ENCODE measurements at regions of chr9 and their contacts with region 1.

Region 1: GRCh38 chr9:3441197-3441816 is 84.5 kb downstream of the RFX3 start:
- DNase-seq: peak in 33 of 35 experiments; percentile 1 to 67 (median 34)
- ATAC-seq: peak; percentile 48 to 74 (median 68)
- H3K4me3 ChIP-seq: no peak overlapping the region
- H3K4me3 Mint-ChIP-seq: no peak overlapping the region
- H3K27ac ChIP-seq: no peak overlapping the region
- H3K27ac Mint-ChIP-seq: no peak overlapping the region
- H3K4me1 ChIP-seq: no peaks in the 10 kb centered on the region
- H3K4me1 Mint-ChIP-seq: peaks cover 8 to 14% (median 12%) of the 10 kb centered on the region in 3 donors
- H3K27me3 ChIP-seq: no peaks in the 10 kb centered on the region
- H3K27me3 Mint-ChIP-seq: no peaks in the 10 kb centered on the region

Region 2: DNA sequence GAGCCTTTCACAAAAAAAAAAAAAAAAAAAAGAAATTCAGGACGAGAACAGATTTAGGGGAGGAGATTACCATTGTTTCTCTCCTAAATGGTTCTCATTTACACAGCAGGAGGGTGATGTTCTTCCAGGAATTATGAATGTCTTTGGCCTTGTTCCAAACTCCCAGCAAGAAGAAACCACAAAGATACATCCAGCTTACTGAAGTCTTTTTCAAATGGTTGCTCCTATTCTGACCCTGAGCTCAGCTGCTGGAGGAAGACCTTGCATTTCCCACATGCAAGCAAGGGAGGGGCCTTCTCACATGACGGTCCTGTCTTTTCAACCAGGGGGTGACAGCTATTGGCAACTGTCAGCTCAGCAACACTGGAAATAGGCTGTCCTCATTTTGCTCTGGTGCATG is 1022.7 kb before region 1 on chr9:
- CTCF ChIA-PET with region 1: no interaction called
- POLR2A ChIA-PET with region 1: no interaction called
- DNase-seq: no peak
- ATAC-seq: no peak
- H3K4me3 ChIP-seq: no peak overlapping the region
- H3K4me3 Mint-ChIP-seq: no peak overlapping the region
- H3K27ac ChIP-seq: no peak overlapping the region
- H3K27ac Mint-ChIP-seq: no peak overlapping the region
- H3K4me1 ChIP-seq: no peaks in the 10 kb centered on the region
- H3K4me1 Mint-ChIP-seq: no peaks in the 10 kb centered on the region
- H3K27me3 ChIP-seq: no peaks in the 10 kb centered on the region
- H3K27me3 Mint-ChIP-seq: peaks cover 0 to 12% of the 10 kb centered on the region in 2 donors

Region 3: DNA sequence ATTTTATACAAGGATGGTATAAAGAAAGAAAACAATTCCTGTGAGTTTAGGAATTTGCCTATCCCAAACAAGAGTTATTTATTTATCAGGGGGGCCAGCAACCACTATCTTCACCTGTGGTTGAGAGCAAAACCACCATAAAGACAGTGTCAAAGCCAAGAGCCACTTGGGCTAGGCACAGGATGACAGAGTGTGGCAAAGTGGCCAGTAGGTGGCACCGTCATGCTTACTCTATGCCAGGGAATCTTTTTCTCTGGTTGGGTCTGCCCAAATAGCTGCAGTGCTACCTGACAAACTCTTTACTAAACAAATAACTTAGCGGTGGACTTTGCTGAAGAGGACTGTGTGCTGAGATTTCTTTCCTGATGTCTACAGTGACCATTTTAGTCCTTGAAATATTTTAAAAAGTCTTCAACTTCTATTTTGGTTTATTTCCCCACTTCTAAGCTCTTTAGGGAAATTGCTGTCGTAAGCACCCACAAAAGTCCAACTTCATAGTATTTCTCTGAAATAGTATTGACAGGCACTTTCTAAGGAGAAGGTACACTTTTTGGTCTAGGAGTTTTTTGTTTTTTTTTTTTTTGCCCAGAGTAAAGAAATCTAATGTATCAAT is 200.5 kb before region 1 on chr9:
- CTCF ChIA-PET with region 1: interaction called, 7 to 36 read pairs
- POLR2A ChIA-PET with region 1: no interaction called
- DNase-seq: peak; percentile 7 to 72 (median 46)
- ATAC-seq: peak; percentile 65 to 75 (median 74)
- H3K4me3 ChIP-seq: no peak overlapping the region
- H3K4me3 Mint-ChIP-seq: no peak overlapping the region
- H3K27ac ChIP-seq: no peak overlapping the region
- H3K27ac Mint-ChIP-seq: no peak overlapping the region
- H3K4me1 ChIP-seq: no peaks in the 10 kb centered on the region
- H3K4me1 Mint-ChIP-seq: no peaks in the 10 kb centered on the region
- H3K27me3 ChIP-seq: no peaks in the 10 kb centered on the region
- H3K27me3 Mint-ChIP-seq: no peaks in the 10 kb centered on the region

Region 4: GRCh38 chr9:3331817-3332216 is 109.5 kb before region 1 on chr9:
- CTCF ChIA-PET with region 1: interaction called in 1 of 2 experiments, 10 read pairs
- POLR2A ChIA-PET with region 1: no interaction called
- DNase-seq: no peak
- ATAC-seq: no peak
- H3K4me3 ChIP-seq: no peak overlapping the region
- H3K4me3 Mint-ChIP-seq: no peak overlapping the region
- H3K27ac ChIP-seq: no peak overlapping the region
- H3K27ac Mint-ChIP-seq: no peak overlapping the region
- H3K4me1 ChIP-seq: no peaks in the 10 kb centered on the region
- H3K4me1 Mint-ChIP-seq: peaks cover 0 to under 1% (median 0%) of the 10 kb centered on the region in 3 donors
- H3K27me3 ChIP-seq: no peaks in the 10 kb centered on the region
- H3K27me3 Mint-ChIP-seq: no peaks in the 10 kb centered on the region